Activated CD4-positive, alpha-beta T cell treated with anti-CD3 and anti-CD28 coated beads for 36 hours (primary cell): ENCODE measurements at regions of chr11 and their contacts with region 1.

Region 1: GRCh38 chr11:123062158-123062891 is 389 bp upstream of the HSPA8 start:
- DNase-seq: peak; percentile 100
- ATAC-seq: peak; percentile 89
- H3K4me3 Mint-ChIP-seq: peak overlapping the region; percentile 99
- H3K27ac Mint-ChIP-seq: peak overlapping the region; percentile 99
- H3K4me1 Mint-ChIP-seq: peaks cover 37% of the 10 kb centered on the region
- H3K27me3 Mint-ChIP-seq: no peaks in the 10 kb centered on the region

Region 2: DNA sequence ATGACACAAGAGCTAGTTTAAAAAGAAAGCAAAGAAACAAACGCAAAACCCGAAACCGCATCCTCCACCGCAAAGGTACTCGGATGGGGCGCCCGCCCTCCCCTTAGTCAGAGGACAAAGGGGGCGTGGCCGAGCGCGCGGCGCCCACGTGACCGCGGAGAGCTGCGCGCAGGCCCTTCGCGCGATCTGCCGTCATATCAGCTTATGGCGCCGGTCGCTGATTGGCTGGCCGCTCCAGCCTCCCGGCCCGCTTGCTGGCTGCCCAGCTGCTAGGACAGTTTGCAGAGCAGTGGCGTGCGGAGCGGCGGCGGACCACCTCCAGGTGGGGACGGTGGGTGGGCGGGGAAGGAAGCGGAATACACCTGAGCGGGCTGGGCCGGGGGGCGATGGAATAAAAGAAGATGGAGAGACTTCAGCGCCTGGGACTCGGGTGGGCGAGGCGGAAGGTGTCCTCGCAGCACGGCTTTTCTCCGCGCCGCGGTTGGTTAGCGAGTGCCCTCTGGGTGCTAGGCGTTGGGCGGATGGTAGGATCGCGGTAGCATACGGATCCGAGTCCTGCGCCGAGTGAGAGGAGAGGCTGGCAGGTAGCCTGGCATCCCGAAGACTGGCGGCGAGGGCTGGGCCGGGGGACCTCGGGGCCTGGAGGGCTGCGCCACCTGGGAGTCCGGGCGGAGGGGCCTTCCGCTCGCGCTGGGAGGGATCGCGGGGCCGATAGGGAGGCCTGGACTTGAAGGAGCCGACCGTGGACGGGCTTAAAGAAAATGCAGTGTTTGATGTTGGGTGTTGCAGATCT is 1769.6 kb before region 1 on chr11 and contains the start of gene SC5D:
- CTCF ChIA-PET with region 1: no interaction called
- POLR2A ChIA-PET with region 1: no interaction called
- intact Hi-C with region 1: loop called in 1 of 2 experiments (anchors 2 kb)
- DNase-seq: peak; percentile 97
- ATAC-seq: peak; percentile 95
- H3K4me3 Mint-ChIP-seq: peak within 1 kb of the TSS; percentile 81
- H3K27ac Mint-ChIP-seq: peak within 1 kb of the TSS; percentile 91
- H3K4me1 Mint-ChIP-seq: peaks cover 36% of the 10 kb centered on the region
- H3K27me3 Mint-ChIP-seq: no peaks in the 10 kb centered on the region
- total RNA-seq, gene SC5D: 22.3 to 29.9 TPM

Region 3: DNA sequence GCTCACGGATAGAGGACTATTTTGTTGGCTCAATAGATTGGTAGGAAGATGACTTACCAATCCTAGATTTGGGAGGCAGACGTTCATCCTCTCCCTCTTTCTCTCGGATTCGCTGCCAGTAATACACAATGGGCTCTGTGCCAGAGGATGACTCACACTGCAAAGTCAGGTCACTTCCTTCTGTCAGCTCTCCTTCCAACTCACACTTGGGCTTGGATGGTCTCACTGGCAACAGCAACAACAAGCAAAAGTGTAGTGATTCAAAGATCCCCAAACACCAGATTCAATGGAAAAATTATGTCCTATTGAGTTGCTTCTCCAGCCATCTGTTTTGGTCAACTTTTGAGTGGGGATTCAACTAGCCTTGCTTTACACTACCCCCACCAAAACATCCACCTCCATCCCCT is 21.3 kb after region 1 on chr11:
- CTCF ChIA-PET with region 1: interaction called, 13 read pairs
- POLR2A ChIA-PET with region 1: interaction called, 23 read pairs
- intact Hi-C with region 1: no loop called
- DNase-seq: peak; percentile 89
- ATAC-seq: peak; percentile 35
- H3K4me3 Mint-ChIP-seq: peak overlapping the region; percentile 34
- H3K27ac Mint-ChIP-seq: peak overlapping the region; percentile 81
- H3K4me1 Mint-ChIP-seq: peaks cover 61% of the 10 kb centered on the region
- H3K27me3 Mint-ChIP-seq: no peaks in the 10 kb centered on the region

Region 4: GRCh38 chr11:123357961-123358841 is 295.9 kb after region 1 on chr11:
- CTCF ChIA-PET with region 1: no interaction called
- POLR2A ChIA-PET with region 1: no interaction called
- intact Hi-C with region 1: loop called in 1 of 2 experiments (anchors 5 kb)
- DNase-seq: peak; percentile 71
- ATAC-seq: peak; percentile 77
- H3K4me3 Mint-ChIP-seq: peak overlapping the region; percentile 78
- H3K27ac Mint-ChIP-seq: peak overlapping the region; percentile 74
- H3K4me1 Mint-ChIP-seq: peaks cover 49% of the 10 kb centered on the region
- H3K27me3 Mint-ChIP-seq: peaks cover 38% of the 10 kb centered on the region

Region 5: DNA sequence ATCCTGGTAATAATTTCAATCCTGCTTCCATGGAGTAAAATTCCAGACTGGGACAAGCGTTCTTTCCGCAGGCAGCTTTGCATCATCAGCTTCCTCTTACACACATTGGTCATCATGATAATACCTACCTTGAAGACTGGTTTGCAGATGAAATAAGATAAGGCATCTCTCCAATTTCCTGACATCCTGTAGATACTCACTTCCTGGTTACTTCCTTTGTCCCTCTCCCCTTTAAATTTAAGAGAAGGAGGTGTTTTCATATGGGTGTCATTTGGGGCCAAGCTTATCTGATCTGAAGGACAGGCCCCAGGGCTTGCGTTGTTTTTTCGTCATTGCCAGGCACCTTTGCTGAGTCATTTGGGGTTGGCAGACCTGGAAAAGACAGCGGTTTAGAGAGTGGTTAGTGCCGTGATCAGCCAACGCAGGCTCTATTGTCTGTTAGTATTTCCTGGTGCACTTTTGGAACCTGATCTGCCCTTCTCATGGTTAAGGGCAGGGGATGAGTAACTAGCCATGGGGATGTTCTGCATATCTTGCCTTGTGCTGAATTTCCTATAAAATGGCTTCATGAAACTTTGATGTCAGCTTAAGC is 391.8 kb after region 1 on chr11:
- CTCF ChIA-PET with region 1: no interaction called
- POLR2A ChIA-PET with region 1: no interaction called
- intact Hi-C with region 1: loop called (anchors 2 to 10 kb)
- DNase-seq: peak; percentile 88
- ATAC-seq: peak; percentile 87
- H3K4me3 Mint-ChIP-seq: peak overlapping the region; percentile 69
- H3K27ac Mint-ChIP-seq: peak overlapping the region; percentile 94
- H3K4me1 Mint-ChIP-seq: peaks cover 78% of the 10 kb centered on the region
- H3K27me3 Mint-ChIP-seq: no peaks in the 10 kb centered on the region